CD4-positive, alpha-beta T cell (primary cell): ENCODE measurements at regions of chr11 and their contacts with region 1.

Region 1: DNA sequence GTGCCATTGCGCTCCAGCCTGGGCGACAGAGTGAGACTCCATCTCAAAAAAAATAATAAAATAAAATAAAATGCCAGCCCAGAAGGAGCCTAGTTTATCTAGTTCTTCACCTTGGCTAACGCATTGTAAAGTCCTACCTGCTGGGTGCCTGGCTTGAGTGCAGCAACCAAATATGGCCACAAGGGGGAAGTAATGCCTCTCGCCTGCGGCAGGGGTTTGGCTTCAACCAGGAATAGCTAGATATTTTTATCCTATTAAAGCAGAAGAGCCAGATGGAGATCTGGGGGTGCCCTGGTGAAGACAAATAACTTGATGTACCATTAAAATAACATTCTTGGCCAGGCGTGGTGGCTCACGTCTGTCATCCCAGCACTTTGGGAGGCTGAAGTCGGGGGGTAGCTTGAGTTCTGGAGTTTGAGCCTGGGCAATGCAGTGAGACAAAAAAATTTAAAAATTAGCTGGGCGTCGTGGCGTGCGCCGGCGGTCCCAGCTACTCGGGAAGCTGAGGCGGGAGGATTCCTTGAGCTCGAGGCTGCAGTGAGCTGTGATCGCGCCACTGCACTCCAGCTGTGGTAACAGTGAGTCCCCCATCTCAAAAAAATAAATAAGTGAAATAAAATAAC is 20.6 kb upstream of the PLEKHB1 start:
- DNase-seq: peak; percentile 55 to 84 (median 64)
- ATAC-seq: peak; percentile 91
- H3K4me3 ChIP-seq: no peak overlapping the region
- H3K4me3 Mint-ChIP-seq: no peak overlapping the region
- H3K27ac ChIP-seq: no peak overlapping the region
- H3K27ac Mint-ChIP-seq: no peak overlapping the region
- H3K4me1 ChIP-seq: peaks cover 5% of the 10 kb centered on the region
- H3K4me1 Mint-ChIP-seq: no peaks in the 10 kb centered on the region
- H3K27me3 ChIP-seq: peaks cover 3 to 14% of the 10 kb centered on the region in 2 experiments
- H3K27me3 Mint-ChIP-seq: peaks cover 23% of the 10 kb centered on the region
- CTCF ChIP-seq: peak; percentile 89

Region 2: GRCh38 chr11:73590991-73591390 is 34.8 kb before region 1 on chr11:
- CTCF ChIA-PET with region 1: interaction called, 10 read pairs
- POLR2A ChIA-PET with region 1: no interaction called
- intact Hi-C with region 1: no loop called
- DNase-seq: no peak
- ATAC-seq: no peak
- H3K4me3 ChIP-seq: no peak overlapping the region
- H3K4me3 Mint-ChIP-seq: no peak overlapping the region
- H3K27ac ChIP-seq: no peak overlapping the region
- H3K27ac Mint-ChIP-seq: no peak overlapping the region
- H3K4me1 ChIP-seq: no peaks in the 10 kb centered on the region
- H3K4me1 Mint-ChIP-seq: peaks cover 36% of the 10 kb centered on the region
- H3K27me3 ChIP-seq: no peaks in the 10 kb centered on the region
- H3K27me3 Mint-ChIP-seq: no peaks in the 10 kb centered on the region
- CTCF ChIP-seq: no peak

Region 3: DNA sequence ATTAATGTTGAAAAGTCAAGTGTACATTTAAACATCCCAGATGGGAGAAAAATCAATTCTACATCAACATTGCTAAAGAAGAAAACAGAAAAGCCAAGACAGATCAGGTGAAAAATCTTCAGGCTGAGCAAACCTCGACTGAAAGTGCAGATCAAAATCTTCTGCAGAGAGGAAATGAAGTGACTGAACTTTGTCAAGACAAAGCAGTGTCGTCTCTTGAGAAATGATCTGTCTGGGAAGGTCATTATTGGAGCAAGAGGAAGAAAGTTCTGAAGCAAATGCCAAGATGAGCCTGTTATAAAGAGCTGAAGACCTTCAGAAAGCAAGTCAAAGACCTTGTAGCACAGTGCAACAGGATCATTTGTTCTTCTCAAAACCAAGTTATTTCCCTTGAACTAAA is 14.8 kb after region 1 on chr11:
- CTCF ChIA-PET with region 1: interaction called, 10 read pairs
- POLR2A ChIA-PET with region 1: interaction called, 8 read pairs
- intact Hi-C with region 1: no loop called
- DNase-seq: no peak
- ATAC-seq: peak; percentile 24
- H3K4me3 ChIP-seq: no peak overlapping the region
- H3K4me3 Mint-ChIP-seq: peak overlapping the region; percentile 5
- H3K27ac ChIP-seq: no peak overlapping the region
- H3K27ac Mint-ChIP-seq: peak overlapping the region; percentile 74
- H3K4me1 ChIP-seq: no peaks in the 10 kb centered on the region
- H3K4me1 Mint-ChIP-seq: peaks cover 12% of the 10 kb centered on the region
- H3K27me3 ChIP-seq: no peaks in the 10 kb centered on the region
- H3K27me3 Mint-ChIP-seq: no peaks in the 10 kb centered on the region
- CTCF ChIP-seq: no peak

Region 4: DNA sequence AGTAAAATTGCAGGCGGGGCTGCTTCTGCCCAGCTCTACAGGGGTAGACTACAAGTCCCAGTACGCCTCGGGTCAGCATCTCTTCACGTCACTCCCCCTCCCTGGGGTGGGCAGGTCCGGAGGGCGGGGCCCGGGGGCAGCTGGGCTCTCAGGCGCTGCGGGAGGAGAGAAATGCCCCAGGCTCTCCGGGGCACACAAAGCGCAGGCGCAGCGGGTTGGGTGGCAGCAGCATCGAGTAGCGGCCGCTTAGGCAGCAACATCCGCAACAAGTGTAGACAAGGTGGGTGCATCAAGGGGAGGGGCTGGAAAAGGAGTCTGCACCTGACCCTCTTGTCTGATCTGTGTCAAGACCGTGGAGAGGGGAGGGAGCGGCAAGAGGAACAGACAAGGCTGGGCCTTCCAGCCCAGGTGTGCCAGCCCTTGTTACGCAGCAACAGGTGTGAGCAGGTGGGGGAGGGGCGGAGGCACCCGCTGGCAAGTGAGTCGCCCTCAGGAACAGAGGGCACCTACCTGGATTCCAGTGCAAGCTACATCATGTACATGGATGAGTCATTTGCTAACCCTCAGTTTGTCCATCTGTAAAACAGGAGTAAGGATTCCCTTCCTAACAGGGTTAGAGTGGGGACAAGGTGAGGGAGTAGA is 21.8 kb after region 1 on chr11:
- CTCF ChIA-PET with region 1: interaction called, 15 read pairs
- POLR2A ChIA-PET with region 1: interaction called, 9 read pairs
- intact Hi-C with region 1: no loop called
- DNase-seq: peak; percentile 90 to 97 (median 94)
- ATAC-seq: peak; percentile 96
- H3K4me3 ChIP-seq: peak overlapping the region; percentile 55
- H3K4me3 Mint-ChIP-seq: peak overlapping the region; percentile 90
- H3K27ac ChIP-seq: peak overlapping the region in 1 of 2 donors; percentile 34
- H3K27ac Mint-ChIP-seq: peak overlapping the region; percentile 91
- H3K4me1 ChIP-seq: peaks cover 25% of the 10 kb centered on the region
- H3K4me1 Mint-ChIP-seq: peaks cover 28% of the 10 kb centered on the region
- H3K27me3 ChIP-seq: no peaks in the 10 kb centered on the region
- H3K27me3 Mint-ChIP-seq: no peaks in the 10 kb centered on the region
- CTCF ChIP-seq: no peak

Region 5: GRCh38 chr11:73931039-73931645 is 305.3 kb after region 1 on chr11:
- CTCF ChIA-PET with region 1: no interaction called
- POLR2A ChIA-PET with region 1: no interaction called
- intact Hi-C with region 1: loop called in 1 of 2 experiments (anchors 5 kb)
- DNase-seq: peak in 4 of 14 experiments; percentile 7 to 39 (median 27)
- ATAC-seq: peak; percentile 26
- H3K4me3 ChIP-seq: no peak overlapping the region
- H3K4me3 Mint-ChIP-seq: no peak overlapping the region
- H3K27ac ChIP-seq: no peak overlapping the region
- H3K27ac Mint-ChIP-seq: no peak overlapping the region
- H3K4me1 ChIP-seq: no peaks in the 10 kb centered on the region
- H3K4me1 Mint-ChIP-seq: no peaks in the 10 kb centered on the region
- H3K27me3 ChIP-seq: no peaks in the 10 kb centered on the region
- H3K27me3 Mint-ChIP-seq: no peaks in the 10 kb centered on the region
- CTCF ChIP-seq: no peak